Activated T-helper 2 cell treated with anti-CD3 and anti-CD28 coated beads, Interferon-gamma antibody, Interleukin-2, Interleukin-4, amounts not matched to agents 10 μg/mL and 5 μg/mL and 100 μg/mL, durations not matched to agents 14 hours and 24 hours and 36 hours (primary cell): ENCODE measurements at regions of chr12 and their contacts with region 1.

Region 1: DNA sequence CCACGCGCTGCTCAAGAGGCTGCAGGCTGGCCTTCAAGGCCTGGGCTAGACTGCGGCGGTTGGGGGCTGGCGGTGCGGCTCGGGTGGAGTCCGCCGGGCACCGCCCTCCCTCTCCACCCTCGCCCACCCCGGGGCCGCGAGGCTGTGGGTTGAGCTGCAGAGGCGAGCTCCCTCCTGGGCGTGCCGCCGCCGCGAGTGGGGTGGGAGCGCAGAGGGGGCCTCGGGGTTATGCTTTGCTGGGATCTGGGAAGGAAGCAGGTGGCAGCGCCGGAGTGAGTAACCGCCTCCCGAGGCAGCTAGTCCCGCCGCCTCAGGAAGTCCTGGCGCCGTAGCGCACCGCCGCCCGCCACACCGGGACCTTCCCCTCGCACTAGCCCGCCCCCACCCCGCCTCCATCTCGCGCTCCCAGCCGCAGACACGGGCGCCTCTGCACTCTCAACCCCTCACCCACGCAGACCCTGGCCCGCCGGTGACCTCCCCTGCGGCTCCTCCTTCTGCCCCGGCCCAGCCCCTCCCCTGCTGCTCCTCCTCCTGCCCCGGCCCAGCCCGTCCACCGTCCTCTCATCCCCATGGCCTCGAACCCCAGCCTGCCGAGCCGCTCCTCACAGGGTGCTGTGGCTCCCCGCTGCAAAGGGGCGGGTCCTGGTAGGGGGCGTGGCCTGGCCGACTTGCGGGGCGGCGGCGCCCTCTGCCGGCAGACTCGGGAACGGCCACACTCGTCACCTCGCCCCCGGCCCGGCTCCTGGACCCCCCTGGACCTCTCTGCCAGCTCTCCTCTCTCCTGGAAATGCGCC is 16.6 kb downstream of the TAMALIN start:
- DNase-seq: peak; percentile 88
- H3K4me3 Mint-ChIP-seq: peak overlapping the region; percentile 87
- H3K27ac Mint-ChIP-seq: peak overlapping the region; percentile 98
- H3K4me1 Mint-ChIP-seq: peaks cover 39% of the 10 kb centered on the region
- H3K27me3 Mint-ChIP-seq: peaks cover 3% of the 10 kb centered on the region

Region 2: DNA sequence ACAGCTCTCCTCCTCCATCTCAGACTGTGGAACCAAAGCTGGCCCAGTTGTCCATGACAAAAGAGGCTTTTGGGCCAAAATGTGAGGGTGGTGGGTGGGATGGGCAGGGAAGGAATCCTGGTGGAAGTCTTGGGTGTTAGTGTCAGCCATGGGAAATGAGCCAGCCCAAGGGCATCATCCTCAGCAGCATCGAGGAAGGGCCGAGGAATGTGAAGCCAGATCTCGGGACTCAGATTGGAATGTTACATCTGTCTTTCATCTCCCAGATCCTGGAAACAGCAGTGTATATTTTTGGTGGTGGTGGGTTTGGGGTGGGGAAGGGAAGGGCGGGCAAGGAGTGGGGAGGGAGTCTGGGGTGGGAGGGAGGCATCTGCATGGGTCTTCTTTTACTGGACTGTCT is 28.4 kb before region 1 on chr12:
- intact Hi-C with region 1: loop called (anchors 1 kb)
- DNase-seq: no peak
- H3K4me3 Mint-ChIP-seq: no peak overlapping the region
- H3K27ac Mint-ChIP-seq: no peak overlapping the region
- H3K4me1 Mint-ChIP-seq: peaks cover 5% of the 10 kb centered on the region
- H3K27me3 Mint-ChIP-seq: no peaks in the 10 kb centered on the region

Region 3: GRCh38 chr12:52050761-52051541 is 27.6 kb after region 1 on chr12 and contains the start of gene NR4A1:
- intact Hi-C with region 1: loop called (anchors 1 kb)
- DNase-seq: peak; percentile 94
- H3K4me3 Mint-ChIP-seq: peak within 1 kb of the TSS; percentile 98
- H3K27ac Mint-ChIP-seq: peak within 1 kb of the TSS; percentile 92
- H3K4me1 Mint-ChIP-seq: peaks cover 25% of the 10 kb centered on the region
- H3K27me3 Mint-ChIP-seq: no peaks in the 10 kb centered on the region
- total RNA-seq, gene NR4A1: 134 and 139 TPM in 2 replicates

Region 4: DNA sequence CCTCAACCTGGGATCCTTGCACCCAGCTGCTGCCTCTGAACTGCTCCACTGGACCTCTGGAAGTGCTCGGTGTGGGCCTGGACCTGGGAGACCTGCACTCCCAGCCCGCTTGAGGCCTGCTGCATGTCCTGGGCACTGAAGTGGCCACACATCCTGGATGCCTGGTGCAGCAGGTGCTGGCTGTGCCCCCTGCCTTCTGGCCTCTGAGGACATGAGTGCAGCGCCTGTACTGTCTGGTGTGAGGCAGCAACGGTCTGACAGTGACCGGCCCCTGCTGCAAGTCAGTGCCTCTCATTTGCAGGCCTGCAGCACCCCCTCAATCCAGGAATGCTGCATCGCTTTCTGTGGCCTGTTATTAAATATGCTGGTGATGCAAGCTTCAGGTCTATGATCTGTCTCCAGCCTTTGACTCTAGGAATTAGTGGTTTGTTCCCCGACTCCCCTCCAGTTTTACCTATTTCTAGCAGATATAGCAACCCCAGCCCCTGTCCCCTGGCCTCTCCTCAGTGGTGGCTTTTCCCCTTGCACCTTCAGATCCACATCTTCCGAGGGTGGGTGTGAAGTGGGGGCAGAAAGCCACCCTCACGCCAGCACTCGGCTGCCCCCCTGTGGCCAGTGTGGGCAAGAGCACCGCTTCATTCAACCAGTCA is 59.7 kb after region 1 on chr12:
- intact Hi-C with region 1: loop called (anchors 1 kb)
- DNase-seq: peak; percentile 43
- H3K4me3 Mint-ChIP-seq: no peak overlapping the region
- H3K27ac Mint-ChIP-seq: no peak overlapping the region
- H3K4me1 Mint-ChIP-seq: peaks cover 3% of the 10 kb centered on the region
- H3K27me3 Mint-ChIP-seq: peaks cover 8% of the 10 kb centered on the region